ENCODE measurements at regions of chr9 and their contacts with region 1.

Region 1: GRCh38 chr9:136482793-136483588 is at the start of gene SEC16A:
- DNase-seq: peak; percentile 98 to 100
- H3K4me3 ChIP-seq: peak within 1 kb of the TSS; percentile 73 to 98 (median 90)
- H3K27ac ChIP-seq: peak within 1 kb of the TSS; percentile 99
- H3K4me1 ChIP-seq: peaks cover 12 to 18% of the 10 kb centered on the region in 2 donors
- H3K27me3 ChIP-seq: no peaks in the 10 kb centered on the region
- CTCF ChIP-seq: no peak
- POLR2A ChIP-seq: peak; percentile 80
- total RNA-seq, gene SEC16A: 41.9 to 55.1 (median 42.9) TPM

Region 2: DNA sequence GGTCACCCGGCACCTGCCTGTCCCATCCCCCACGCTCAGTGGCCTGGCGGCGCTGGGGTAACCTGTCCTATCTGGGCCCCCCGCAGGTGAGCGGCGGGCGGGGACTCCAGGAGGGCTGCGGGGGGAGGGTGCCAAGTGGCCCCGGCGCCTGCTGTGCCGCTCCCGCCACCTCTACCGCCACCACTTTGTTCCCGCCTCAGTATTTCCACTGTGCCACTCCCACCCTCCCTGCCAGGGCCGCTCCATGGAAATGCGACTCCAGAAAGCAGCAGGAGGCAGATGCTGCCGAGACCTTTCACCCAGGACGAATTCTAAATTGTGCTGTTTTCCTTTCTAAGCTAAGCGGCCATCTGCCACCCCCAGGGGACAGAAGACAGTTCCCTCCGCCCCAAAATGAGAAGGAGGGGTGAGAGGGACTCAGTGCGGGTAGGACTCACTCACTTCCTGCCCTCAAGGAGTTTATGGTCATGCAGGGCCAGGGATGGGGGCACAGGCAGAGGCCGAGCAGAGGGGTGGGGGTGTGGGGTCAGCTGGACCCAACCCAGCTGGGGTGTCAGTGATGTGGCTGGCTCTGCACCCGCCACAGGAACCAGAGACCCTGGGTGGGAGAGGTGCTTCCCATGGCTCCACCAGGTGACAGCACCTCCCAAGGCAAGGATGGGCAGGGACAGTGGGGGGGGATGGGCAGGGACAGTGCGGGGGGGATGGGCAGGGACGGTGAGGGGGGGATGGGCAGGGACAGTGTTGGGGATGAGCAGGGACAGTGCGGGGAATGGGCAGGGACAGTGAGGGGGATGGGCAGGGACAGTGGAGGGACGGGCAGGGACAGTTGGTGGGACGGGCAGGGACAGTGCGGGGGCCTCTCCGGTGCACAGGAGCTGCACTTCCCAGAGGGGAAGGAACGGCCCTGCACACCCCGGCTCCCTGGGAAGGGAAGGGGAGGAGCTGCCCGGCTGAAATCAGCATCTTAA is 45.0 kb after region 1 on chr9:
- intact Hi-C with region 1: loop called (anchors 1 kb)
- DNase-seq: no peak
- H3K4me3 ChIP-seq: no peak overlapping the region
- H3K27ac ChIP-seq: peak overlapping the region in 1 of 2 donors; percentile 79
- H3K4me1 ChIP-seq: no peaks in the 10 kb centered on the region
- H3K27me3 ChIP-seq: no peaks in the 10 kb centered on the region
- CTCF ChIP-seq: no peak
- POLR2A ChIP-seq: no peak

Region 3: DNA sequence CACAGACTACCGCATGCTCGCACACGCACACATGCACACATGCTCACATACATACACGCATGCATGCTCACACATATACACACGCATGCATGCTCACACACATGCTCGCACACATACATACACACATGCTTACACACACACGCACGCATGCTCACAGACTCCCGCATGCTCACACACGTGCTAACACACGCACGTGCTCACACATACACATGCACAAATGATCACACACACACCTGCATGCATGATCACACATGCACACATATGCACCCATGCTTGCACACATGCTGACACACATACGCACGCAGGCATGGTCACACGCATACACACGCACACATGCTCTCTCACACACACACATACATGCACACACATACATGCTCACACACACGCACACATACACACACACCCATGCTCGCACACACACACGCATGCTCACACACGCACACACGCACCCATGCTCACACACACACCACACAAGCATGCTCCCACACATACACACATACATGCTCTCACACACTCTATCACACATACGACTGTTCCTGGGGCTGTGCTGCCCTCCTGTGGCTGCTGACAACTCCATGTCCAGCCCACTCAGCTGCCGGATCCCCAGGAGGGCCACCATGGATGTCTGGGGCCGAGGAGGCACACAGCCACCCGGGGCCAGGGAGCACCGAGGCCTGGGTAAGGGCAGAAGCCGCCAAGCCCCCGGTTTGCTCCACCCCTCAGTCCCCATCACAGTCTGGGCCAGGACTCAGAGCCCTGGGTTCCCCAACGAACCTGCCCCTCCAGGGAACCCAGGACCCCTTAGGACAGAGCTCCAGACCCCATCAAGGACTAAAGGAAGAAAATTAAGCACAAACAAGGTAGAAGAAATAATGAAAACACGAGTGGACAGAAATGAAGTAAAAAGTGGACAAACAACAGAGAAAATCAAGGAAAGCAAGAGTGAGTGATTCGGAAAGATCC is 148.3 kb after region 1 on chr9:
- intact Hi-C with region 1: loop called (anchors 5 kb)
- DNase-seq: peak in 1 of 2 donors; percentile 69
- H3K4me3 ChIP-seq: no peak overlapping the region
- H3K27ac ChIP-seq: no peak overlapping the region
- H3K4me1 ChIP-seq: no peaks in the 10 kb centered on the region
- H3K27me3 ChIP-seq: peaks cover 0 to 8% of the 10 kb centered on the region in 2 donors
- CTCF ChIP-seq: peak; percentile 32 to 94 (median 79)
- POLR2A ChIP-seq: no peak

Region 4: DNA sequence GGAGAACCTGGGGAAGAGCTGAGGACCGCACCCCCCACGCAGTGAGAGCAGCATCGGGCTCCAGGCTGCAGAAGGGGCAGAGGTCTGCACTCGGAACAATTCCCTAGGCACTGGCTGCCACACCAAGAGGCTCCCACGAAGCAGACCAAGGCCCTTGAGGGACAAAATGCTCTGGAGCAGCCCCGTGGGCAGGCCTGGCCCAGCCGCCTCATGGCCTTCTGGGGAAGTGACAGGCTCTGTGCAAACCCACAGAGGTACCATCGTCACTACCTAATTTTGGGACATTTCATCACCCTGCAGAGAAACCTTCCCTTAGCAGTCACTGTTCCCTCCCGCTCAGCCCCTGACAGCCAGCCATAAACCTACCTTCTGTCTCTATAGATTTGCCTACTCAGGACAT is 445.6 kb after region 1 on chr9:
- intact Hi-C with region 1: no loop called
- DNase-seq: no peak
- H3K4me3 ChIP-seq: no peak overlapping the region
- H3K27ac ChIP-seq: peak overlapping the region in 1 of 2 donors; percentile 25
- H3K4me1 ChIP-seq: no peaks in the 10 kb centered on the region
- H3K27me3 ChIP-seq: no peaks in the 10 kb centered on the region
- CTCF ChIP-seq: no peak
- POLR2A ChIP-seq: no peak

Region 5: DNA sequence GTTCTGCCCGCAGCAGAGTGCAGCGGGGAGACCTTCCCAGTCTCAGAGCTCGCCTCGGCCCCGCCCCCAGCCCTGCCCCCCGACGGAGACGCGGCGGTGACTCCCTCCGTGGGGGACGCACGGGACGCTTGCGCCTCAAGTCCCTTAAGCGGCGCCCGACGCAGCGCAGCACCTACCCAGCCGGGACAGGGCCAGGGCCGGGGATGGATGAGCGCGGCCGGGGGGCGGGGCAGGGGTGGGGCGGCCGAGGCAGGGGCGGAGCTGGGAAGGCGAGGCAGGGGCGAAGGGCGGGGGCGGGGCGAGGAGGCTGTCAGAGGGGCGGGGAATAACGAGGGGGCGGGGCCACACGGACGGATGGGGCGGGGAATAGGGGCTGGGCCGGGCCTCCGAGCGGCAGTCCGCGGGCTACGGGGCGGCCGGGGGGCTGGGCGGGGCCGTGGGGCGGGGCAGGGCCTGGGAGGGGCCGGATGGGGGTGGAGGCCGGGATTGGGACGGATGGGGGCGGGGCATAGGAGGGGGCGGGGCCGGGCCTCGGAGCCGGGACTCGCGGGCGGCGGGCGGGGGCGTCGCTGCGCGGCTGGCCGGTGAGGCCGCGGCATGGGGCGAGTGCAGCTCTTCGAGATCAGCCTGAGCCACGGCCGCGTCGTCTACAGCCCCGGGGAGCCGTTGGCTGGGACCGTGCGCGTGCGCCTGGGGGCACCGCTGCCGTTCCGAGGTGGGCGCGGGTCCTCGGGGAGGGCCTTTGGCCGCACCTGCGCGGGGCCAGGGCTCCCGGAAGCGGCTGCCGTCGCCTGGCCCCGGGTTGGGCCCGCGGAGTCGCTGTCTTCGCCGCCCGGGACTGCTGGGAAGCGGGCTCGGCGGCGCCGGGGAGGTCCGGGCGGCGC is 1122.4 kb after region 1 on chr9 and contains the start of gene ARRDC1:
- intact Hi-C with region 1: loop called (anchors 5 kb)
- DNase-seq: peak; percentile 92 to 95
- H3K4me3 ChIP-seq: peak within 1 kb of the TSS; percentile 78 to 99 (median 80)
- H3K27ac ChIP-seq: peak within 1 kb of the TSS; percentile 88 to 92
- H3K4me1 ChIP-seq: peaks cover 15 to 19% of the 10 kb centered on the region in 2 donors
- H3K27me3 ChIP-seq: peaks cover 0 to 3% of the 10 kb centered on the region in 2 donors
- CTCF ChIP-seq: no peak
- POLR2A ChIP-seq: no peak
- total RNA-seq, gene ARRDC1: 23.8 to 122 (median 57.0) TPM